Heart left ventricle (tissue), 16 donors: ENCODE measurements at regions of chr14 and their contacts with region 1.

Region 1: GRCh38 chr14:74712499-74713394 is at the starts of genes AREL1 and FCF1:
- DNase-seq: peak; percentile 78 to 86 (median 83)
- ATAC-seq: peak; percentile 95 to 99 (median 99)
- H3K4me3 ChIP-seq: peak within 1 kb of the TSS; percentile 63 to 95 (median 80)
- H3K27ac ChIP-seq: peak within 1 kb of the TSS; percentile 59 to 88 (median 78)
- H3K4me1 ChIP-seq: peaks cover 0 to 44% (median 28%) of the 10 kb centered on the region in 12 donors
- H3K27me3 ChIP-seq: no peaks in the 10 kb centered on the region
- CTCF ChIP-seq: no peak
- POLR2A ChIP-seq: peak; percentile 23 to 79
- total RNA-seq, gene AREL1: 17.1 to 30.9 (median 22.4) TPM
- total RNA-seq, gene FCF1: 12.3 to 44.6 (median 36.7) TPM

Region 2: DNA sequence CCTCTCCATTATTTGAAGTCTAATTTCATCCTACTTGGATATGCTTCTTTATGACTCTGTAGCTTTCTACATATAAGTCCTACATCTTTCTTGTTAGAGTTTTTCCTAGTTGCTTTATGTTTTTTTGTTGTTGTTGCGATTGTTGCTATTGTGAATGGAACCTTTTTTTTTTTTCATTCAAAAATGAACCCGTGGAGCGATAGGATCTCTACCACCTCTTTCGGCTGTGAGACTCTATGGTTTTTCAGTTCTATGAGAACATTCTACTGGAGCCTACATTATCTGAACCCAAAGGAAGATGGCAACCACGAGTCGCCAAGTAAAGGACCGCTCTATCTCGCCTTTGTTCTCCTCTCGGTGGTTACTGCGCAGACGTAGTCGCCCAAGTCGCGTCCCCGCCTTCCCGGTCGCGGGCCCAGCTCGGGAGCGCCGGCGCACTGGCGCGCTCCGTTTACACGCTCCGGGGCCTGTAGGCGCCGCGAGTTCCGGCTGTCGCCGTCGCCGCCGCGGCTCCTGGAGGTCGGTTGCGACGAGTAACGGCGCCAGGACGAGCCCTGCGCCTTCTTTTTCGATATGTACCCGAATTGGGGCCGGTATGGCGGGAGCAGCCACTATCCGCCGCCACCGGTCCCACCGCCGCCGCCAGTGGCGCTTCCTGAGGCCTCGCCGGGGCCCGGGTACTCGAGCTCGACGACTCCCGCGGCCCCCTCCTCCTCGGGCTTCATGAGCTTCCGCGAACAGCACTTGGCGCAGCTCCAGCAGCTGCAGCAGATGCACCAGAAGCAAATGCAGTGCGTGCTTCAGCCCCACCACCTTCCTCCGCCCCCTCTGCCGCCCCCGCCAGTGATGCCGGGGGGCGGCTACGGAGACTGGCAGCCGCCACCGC is 50.4 kb after region 1 on chr14 and contains the start of gene YLPM1:
- intact Hi-C with region 1: loop called in 3 of 10 experiments (anchors 10 kb)
- DNase-seq: peak; percentile 92 to 96 (median 94)
- ATAC-seq: peak; percentile 97 to 99 (median 99)
- H3K4me3 ChIP-seq: peak within 1 kb of the TSS; percentile 87 to 100 (median 97)
- H3K27ac ChIP-seq: peak within 1 kb of the TSS; percentile 85 to 98 (median 92)
- H3K4me1 ChIP-seq: peaks cover 0 to 45% (median 36%) of the 10 kb centered on the region in 12 donors
- H3K27me3 ChIP-seq: no peaks in the 10 kb centered on the region
- CTCF ChIP-seq: peak; percentile 33 to 84 (median 57)
- POLR2A ChIP-seq: peak in 1 of 2 donors; percentile 86
- total RNA-seq, gene YLPM1: 23.1 to 48.1 (median 27.7) TPM